Naive thymus-derived CD4-positive, alpha-beta T cell (primary cell): ENCODE measurements at regions of chr1 and their contacts with region 1.

Region 1: DNA sequence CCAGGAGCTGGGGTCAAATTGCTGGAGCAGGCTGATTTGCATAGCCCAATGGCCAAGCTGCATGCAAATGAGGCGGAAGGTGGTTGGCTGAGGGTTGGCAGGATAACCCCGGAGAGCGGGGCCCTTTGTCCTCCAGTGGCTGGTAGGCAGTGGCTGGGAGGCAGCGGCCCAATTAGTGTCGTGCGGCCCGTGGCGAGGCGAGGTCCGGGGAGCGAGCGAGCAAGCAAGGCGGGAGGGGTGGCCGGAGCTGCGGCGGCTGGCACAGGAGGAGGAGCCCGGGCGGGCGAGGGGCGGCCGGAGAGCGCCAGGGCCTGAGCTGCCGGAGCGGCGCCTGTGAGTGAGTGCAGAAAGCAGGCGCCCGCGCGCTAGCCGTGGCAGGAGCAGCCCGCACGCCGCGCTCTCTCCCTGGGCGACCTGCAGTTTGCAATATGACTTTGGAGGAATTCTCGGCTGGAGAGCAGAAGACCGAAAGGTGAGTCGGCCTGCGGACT is at the start of gene GADD45A:
- DNase-seq: peak; percentile 80 to 96 (median 94)
- ATAC-seq: peak; percentile 93
- H3K4me3 ChIP-seq: peak within 1 kb of the TSS; percentile 69
- H3K4me3 Mint-ChIP-seq: peak within 1 kb of the TSS; percentile 90 to 99 (median 98)
- H3K27ac ChIP-seq: peak within 1 kb of the TSS; percentile 59
- H3K27ac Mint-ChIP-seq: peak within 1 kb of the TSS; percentile 77 to 98 (median 93)
- H3K4me1 ChIP-seq: peaks cover 9 to 16% of the 10 kb centered on the region in 2 donors
- H3K4me1 Mint-ChIP-seq: peaks cover 20 to 42% (median 26%) of the 10 kb centered on the region in 7 donors
- H3K27me3 ChIP-seq: no peaks in the 10 kb centered on the region
- H3K27me3 Mint-ChIP-seq: no peaks in the 10 kb centered on the region
- total RNA-seq, gene GADD45A: 15.0 to 70.4 (median 24.2) TPM

Region 2: DNA sequence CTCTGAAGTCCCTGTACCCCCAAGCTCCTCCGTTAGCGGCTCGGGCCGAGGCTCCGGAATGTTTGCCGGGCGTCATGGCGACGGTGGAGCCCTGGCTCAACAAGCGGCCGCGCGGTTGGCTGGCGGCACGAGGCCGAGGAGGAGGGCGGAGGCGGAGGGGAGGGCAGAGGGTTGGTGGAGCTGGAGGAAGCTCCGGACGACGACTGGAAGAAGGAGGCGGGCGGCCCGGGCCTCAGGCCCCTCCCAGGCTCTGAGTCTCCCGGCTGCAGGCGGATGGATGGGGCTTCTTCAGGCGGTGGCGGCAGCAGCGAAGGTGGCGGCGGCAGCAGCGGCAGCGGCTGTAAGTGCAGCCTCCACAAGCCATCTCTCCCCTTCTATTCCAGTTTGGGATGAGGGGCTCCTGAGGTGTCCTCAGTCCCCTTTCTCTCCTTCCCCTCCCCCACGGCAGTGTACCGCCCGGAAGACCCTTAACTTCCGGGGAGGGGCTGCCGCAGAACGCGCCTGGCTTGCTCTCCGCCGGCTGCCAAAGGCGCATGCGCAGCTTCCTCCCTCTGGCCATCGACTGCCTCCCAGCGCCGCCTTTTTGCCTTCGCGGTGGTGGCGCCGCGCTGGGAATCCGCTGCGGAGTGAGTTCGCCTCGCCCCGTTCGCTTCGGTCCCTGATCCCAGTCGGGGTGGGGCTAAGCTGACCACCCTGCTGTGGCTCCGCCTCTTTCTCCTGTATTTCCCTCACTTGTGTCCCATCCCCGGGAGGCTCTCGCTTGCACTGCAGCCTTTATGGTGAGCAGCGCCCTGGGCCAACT is 760.2 kb before region 1 on chr1 and contains the starts of genes DNAI4 and MIER1:
- CTCF ChIA-PET with region 1: no interaction called
- POLR2A ChIA-PET with region 1: no interaction called
- intact Hi-C with region 1: loop called (anchors 1 to 2 kb)
- DNase-seq: peak; percentile 91 to 98 (median 96)
- ATAC-seq: peak; percentile 97
- H3K4me3 ChIP-seq: peak within 1 kb of the TSS; percentile 83
- H3K4me3 Mint-ChIP-seq: peak within 1 kb of the TSS; percentile 92 to 98 (median 96)
- H3K27ac ChIP-seq: peak within 1 kb of the TSS; percentile 95
- H3K27ac Mint-ChIP-seq: peak within 1 kb of the TSS; percentile 95 to 97 (median 97)
- H3K4me1 ChIP-seq: peaks cover 24 to 37% of the 10 kb centered on the region in 2 donors
- H3K4me1 Mint-ChIP-seq: peaks cover 18 to 75% (median 60%) of the 10 kb centered on the region in 7 donors
- H3K27me3 ChIP-seq: no peaks in the 10 kb centered on the region
- H3K27me3 Mint-ChIP-seq: no peaks in the 10 kb centered on the region
- total RNA-seq, gene DNAI4: 1.3 to 10.7 (median 9.7) TPM
- total RNA-seq, gene MIER1: 51.5 to 73.6 (median 70.9) TPM

Region 3: DNA sequence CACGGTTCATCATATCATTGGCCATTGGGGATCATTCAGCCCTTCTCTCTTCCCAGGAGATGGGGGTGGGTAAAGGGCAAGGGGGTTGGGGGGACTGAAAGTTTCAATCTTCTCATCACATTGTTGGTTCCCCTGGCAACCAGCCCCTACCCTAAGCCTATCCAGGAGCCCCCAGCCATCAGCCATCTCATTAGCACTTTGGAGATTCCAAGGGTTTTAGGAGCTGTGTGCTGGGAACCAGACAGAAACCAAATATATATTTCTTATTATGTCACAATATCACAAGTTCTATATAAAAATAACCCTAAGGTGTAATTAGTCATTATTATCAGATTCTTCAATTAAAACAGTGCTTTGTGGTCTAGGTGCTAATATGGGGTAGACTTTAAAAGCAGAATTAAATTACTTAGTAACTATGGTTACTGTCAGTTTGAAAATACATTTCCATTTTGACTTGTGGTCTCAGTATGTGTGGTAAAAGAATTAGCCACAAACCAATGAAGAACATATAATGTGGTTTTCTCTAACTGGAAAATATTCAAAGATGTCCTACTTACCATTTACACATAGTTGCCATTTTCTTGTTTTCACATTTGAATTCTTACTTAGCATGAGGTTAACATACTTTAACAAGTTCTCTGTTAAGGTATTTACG is 490.8 kb before region 1 on chr1:
- CTCF ChIA-PET with region 1: no interaction called
- POLR2A ChIA-PET with region 1: no interaction called
- intact Hi-C with region 1: loop called in 1 of 2 experiments (anchors 10 kb)
- DNase-seq: peak in 4 of 9 donors; percentile 19 to 49 (median 31)
- ATAC-seq: peak; percentile 73
- H3K4me3 ChIP-seq: no peak overlapping the region
- H3K4me3 Mint-ChIP-seq: peak overlapping the region in 2 of 10 donors; percentile 15 to 17
- H3K27ac ChIP-seq: no peak overlapping the region
- H3K27ac Mint-ChIP-seq: peak overlapping the region in 1 of 9 donors; percentile 75
- H3K4me1 ChIP-seq: peaks cover 4 to 20% of the 10 kb centered on the region in 2 donors
- H3K4me1 Mint-ChIP-seq: peaks cover 4 to 30% (median 12%) of the 10 kb centered on the region in 7 donors
- H3K27me3 ChIP-seq: no peaks in the 10 kb centered on the region
- H3K27me3 Mint-ChIP-seq: peaks cover 0 to 3% (median 0%) of the 10 kb centered on the region in 5 donors

Region 4: GRCh38 chr1:67339623-67340343 is 345.3 kb before region 1 on chr1:
- CTCF ChIA-PET with region 1: no interaction called
- POLR2A ChIA-PET with region 1: no interaction called
- intact Hi-C with region 1: loop called in 1 of 2 experiments (anchors 10 kb)
- DNase-seq: peak in 1 of 9 donors; percentile 41
- ATAC-seq: no peak
- H3K4me3 ChIP-seq: no peak overlapping the region
- H3K4me3 Mint-ChIP-seq: peak overlapping the region in 3 of 10 donors; percentile 1 to 61 (median 35)
- H3K27ac ChIP-seq: no peak overlapping the region
- H3K27ac Mint-ChIP-seq: peak overlapping the region in 1 of 9 donors; percentile 81
- H3K4me1 ChIP-seq: peaks cover 11 to 24% of the 10 kb centered on the region in 2 donors
- H3K4me1 Mint-ChIP-seq: peaks cover 30 to 81% (median 62%) of the 10 kb centered on the region in 7 donors
- H3K27me3 ChIP-seq: no peaks in the 10 kb centered on the region
- H3K27me3 Mint-ChIP-seq: no peaks in the 10 kb centered on the region

Region 5: DNA sequence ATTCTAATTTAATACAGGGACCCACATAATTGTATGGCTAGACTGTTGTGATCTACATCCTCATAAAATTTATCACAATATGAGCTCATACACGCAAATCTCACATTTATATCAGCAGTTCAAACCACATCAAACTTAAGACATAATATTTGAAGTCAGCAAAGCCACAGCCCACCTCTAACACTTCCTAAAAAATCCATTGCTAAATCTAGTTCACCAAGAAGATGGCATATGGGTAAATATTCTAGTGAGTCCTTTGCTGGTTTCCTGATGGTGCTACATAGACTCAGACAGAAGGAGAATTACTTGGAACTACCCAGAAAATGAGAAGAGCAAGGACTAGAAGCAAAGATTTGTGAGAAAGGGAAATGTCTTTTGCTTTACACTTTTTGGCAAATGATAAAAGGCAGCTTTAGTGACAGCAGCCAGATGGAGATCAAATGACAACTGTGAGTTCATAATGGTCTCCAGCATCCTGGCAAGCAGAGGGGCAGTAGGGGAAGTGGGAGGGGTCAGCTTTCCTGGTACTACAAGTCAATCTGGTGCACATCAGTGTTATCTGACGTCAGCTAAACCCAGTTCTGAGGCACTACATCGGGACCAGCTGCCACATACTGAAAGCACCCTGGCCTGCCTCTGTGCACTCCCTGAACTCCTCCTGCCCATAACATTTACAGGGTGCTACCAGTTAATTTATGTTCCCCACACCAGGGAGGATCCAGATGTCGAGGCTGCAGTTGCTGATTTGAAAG is 10.7 kb before region 1 on chr1:
- CTCF ChIA-PET with region 1: interaction called, 4 read pairs
- POLR2A ChIA-PET with region 1: interaction called, 48 read pairs
- intact Hi-C with region 1: loop called (anchors 1 kb)
- DNase-seq: peak; percentile 8 to 84 (median 76)
- ATAC-seq: peak; percentile 87
- H3K4me3 ChIP-seq: no peak overlapping the region
- H3K4me3 Mint-ChIP-seq: peak overlapping the region; percentile 39 to 81 (median 58)
- H3K27ac ChIP-seq: no peak overlapping the region
- H3K27ac Mint-ChIP-seq: peak overlapping the region; percentile 35 to 95 (median 82)
- H3K4me1 ChIP-seq: peaks cover 13 to 22% of the 10 kb centered on the region in 2 donors
- H3K4me1 Mint-ChIP-seq: peaks cover 8 to 26% (median 24%) of the 10 kb centered on the region in 7 donors
- H3K27me3 ChIP-seq: no peaks in the 10 kb centered on the region
- H3K27me3 Mint-ChIP-seq: peaks cover 0 to 40% (median 0%) of the 10 kb centered on the region in 5 donors

Region 6: GRCh38 chr1:67760030-67760821 is 75.1 kb after region 1 on chr1:
- CTCF ChIA-PET with region 1: interaction called, 10 read pairs
- POLR2A ChIA-PET with region 1: interaction called, 7 read pairs
- intact Hi-C with region 1: loop called (anchors 1 to 2 kb)
- DNase-seq: peak; percentile 17 to 64 (median 45)
- ATAC-seq: peak; percentile 73
- H3K4me3 ChIP-seq: no peak overlapping the region
- H3K4me3 Mint-ChIP-seq: no peak overlapping the region
- H3K27ac ChIP-seq: no peak overlapping the region
- H3K27ac Mint-ChIP-seq: no peak overlapping the region
- H3K4me1 ChIP-seq: no peaks in the 10 kb centered on the region
- H3K4me1 Mint-ChIP-seq: no peaks in the 10 kb centered on the region
- H3K27me3 ChIP-seq: peaks cover 0 to 5% of the 10 kb centered on the region in 2 donors
- H3K27me3 Mint-ChIP-seq: peaks cover 18 to 33% (median 24%) of the 10 kb centered on the region in 5 donors

Region 7: GRCh38 chr1:68074472-68074871 is 389.4 kb after region 1 on chr1:
- CTCF ChIA-PET with region 1: no interaction called
- POLR2A ChIA-PET with region 1: no interaction called
- intact Hi-C with region 1: no loop called
- DNase-seq: no peak
- ATAC-seq: no peak
- H3K4me3 ChIP-seq: no peak overlapping the region
- H3K4me3 Mint-ChIP-seq: no peak overlapping the region
- H3K27ac ChIP-seq: no peak overlapping the region
- H3K27ac Mint-ChIP-seq: no peak overlapping the region
- H3K4me1 ChIP-seq: no peaks in the 10 kb centered on the region
- H3K4me1 Mint-ChIP-seq: no peaks in the 10 kb centered on the region
- H3K27me3 ChIP-seq: no peaks in the 10 kb centered on the region
- H3K27me3 Mint-ChIP-seq: peaks cover 0 to 25% (median 6%) of the 10 kb centered on the region in 5 donors

Region 8: DNA sequence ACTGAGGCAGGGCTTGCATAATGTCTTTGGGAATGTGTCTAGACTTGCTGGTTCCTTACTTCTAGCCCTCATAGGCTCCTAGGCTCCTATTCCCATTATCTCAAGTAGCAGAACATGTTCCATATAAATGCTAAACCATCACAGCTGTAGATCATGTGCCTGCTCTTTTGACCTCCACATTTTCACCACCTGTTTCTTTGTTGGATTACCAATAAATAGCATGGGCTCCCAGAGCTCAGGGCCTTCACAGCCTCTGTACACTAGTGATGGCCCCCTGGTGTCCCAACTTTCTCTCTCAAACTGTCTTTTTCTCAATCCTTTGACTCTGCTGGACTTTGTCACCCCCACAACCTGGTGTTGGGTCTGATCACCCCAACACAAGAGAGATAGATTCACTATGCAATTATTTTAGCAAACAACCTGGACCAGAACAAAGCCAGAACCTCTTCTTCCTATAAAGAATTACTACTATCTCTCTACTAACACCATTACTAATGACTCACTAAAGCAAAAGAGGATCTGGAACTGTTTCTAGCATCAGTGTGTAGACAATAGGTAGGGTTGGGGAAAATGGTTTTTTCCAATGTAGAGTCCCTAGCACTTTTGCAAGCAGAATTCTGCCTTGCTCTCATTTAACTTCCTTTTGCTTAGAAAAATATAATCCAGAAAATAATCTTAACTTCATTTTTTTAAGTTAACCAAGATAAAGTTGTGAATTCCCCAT is 495.5 kb after region 1 on chr1:
- CTCF ChIA-PET with region 1: no interaction called
- POLR2A ChIA-PET with region 1: no interaction called
- intact Hi-C with region 1: no loop called
- DNase-seq: no peak
- ATAC-seq: no peak
- H3K4me3 ChIP-seq: no peak overlapping the region
- H3K4me3 Mint-ChIP-seq: no peak overlapping the region
- H3K27ac ChIP-seq: no peak overlapping the region
- H3K27ac Mint-ChIP-seq: no peak overlapping the region
- H3K4me1 ChIP-seq: no peaks in the 10 kb centered on the region
- H3K4me1 Mint-ChIP-seq: peaks cover 0 to 5% (median 0%) of the 10 kb centered on the region in 7 donors
- H3K27me3 ChIP-seq: no peaks in the 10 kb centered on the region
- H3K27me3 Mint-ChIP-seq: peaks cover 0 to 27% (median 5%) of the 10 kb centered on the region in 5 donors